ENCODE measurements at regions of chr1 and their contacts with region 1.

Region 1: GRCh38 chr1:23854568-23854967 is 13.5 kb downstream of the FUCA1 start:
- DNase-seq: no peak
- ATAC-seq: peak in 3 of 4 donors; percentile 75 to 85 (median 75)
- H3K4me3 ChIP-seq: no peak overlapping the region
- H3K27ac ChIP-seq: no peak overlapping the region
- H3K4me1 ChIP-seq: no peaks in the 10 kb centered on the region
- H3K27me3 ChIP-seq: no peaks in the 10 kb centered on the region
- CTCF ChIP-seq: peak; percentile 36

Region 2: GRCh38 chr1:23756676-23757075 is 97.9 kb before region 1 on chr1:
- intact Hi-C with region 1: no loop called
- DNase-seq: no peak
- ATAC-seq: peak in 2 of 4 donors; percentile 48 to 50
- H3K4me3 ChIP-seq: no peak overlapping the region
- H3K27ac ChIP-seq: no peak overlapping the region
- H3K4me1 ChIP-seq: peaks cover 26% of the 10 kb centered on the region
- H3K27me3 ChIP-seq: no peaks in the 10 kb centered on the region
- CTCF ChIP-seq: no peak

Region 3: GRCh38 chr1:23804183-23804835 is 50.3 kb before region 1 on chr1:
- intact Hi-C with region 1: loop called in 1 of 2 experiments (anchors 2 kb)
- DNase-seq: no peak
- ATAC-seq: no peak
- H3K4me3 ChIP-seq: no peak overlapping the region
- H3K27ac ChIP-seq: no peak overlapping the region
- H3K4me1 ChIP-seq: peaks cover 7% of the 10 kb centered on the region
- H3K27me3 ChIP-seq: no peaks in the 10 kb centered on the region
- CTCF ChIP-seq: no peak

Region 4: GRCh38 chr1:23809751-23810171 is 44.8 kb before region 1 on chr1:
- intact Hi-C with region 1: loop called (anchors 2 kb)
- DNase-seq: peak; percentile 76 to 87
- ATAC-seq: peak; percentile 88 to 97 (median 90)
- H3K4me3 ChIP-seq: no peak overlapping the region
- H3K27ac ChIP-seq: no peak overlapping the region
- H3K4me1 ChIP-seq: no peaks in the 10 kb centered on the region
- H3K27me3 ChIP-seq: no peaks in the 10 kb centered on the region
- CTCF ChIP-seq: peak; percentile 78